ENCODE measurements at regions of chr6 and their contacts with region 1.

Region 1: DNA sequence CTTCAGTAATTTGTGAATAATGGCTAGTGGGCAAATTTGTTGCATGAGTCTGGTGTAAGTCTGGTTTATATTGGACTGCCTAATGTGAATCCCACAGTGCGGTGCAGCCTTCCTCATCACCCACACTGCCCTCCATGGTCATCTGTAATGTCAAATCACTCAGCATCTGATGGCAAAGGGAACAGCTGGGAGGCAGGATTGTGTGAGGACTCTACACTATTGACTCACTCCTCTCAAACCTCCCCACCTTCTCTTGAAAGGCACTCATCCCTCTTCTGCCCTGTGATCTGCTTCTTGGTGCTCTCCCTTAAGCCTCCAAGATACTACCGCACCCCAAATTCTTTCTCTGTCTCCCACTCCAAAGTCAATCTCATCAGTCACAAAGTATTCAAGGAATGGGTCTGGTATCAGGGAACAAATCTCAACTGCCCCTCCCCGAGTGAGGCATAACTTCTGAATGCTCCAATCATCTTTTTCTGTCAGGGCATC is 146.0 kb upstream of the BEND6 start:
- DNase-seq: peak; percentile 91
- H3K4me3 ChIP-seq: no peak overlapping the region
- H3K27ac ChIP-seq: peak overlapping the region; percentile 80
- H3K4me1 ChIP-seq: peaks cover 18% of the 10 kb centered on the region
- H3K27me3 ChIP-seq: no peaks in the 10 kb centered on the region
- CTCF ChIP-seq: no peak

Region 2: DNA sequence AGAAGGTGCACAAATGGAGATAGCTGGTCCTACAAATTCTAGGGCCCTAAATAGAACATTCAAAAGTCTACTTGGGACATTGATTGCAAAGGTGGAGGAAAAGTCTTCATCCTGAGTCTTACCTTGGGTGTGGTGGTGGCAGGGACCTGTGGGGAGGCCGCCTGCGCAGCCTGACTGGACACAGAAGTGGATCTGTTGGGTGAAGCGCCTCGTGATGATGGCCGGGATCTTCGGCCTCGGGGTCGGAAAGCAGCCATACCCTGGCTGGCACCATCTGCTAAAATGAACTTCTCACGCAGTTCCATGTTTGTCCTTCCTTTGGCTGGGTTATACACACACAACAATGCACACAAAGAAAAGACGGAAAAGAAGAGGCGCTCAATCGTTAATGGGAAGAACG is 345.5 kb before region 1 on chr6:
- CTCF ChIA-PET with region 1: no interaction called
- dilution Hi-C with region 1: no loop called
- in situ Hi-C with region 1: no loop called
- intact Hi-C with region 1: no loop called
- DNase-seq: no peak
- H3K4me3 ChIP-seq: no peak overlapping the region
- H3K27ac ChIP-seq: no peak overlapping the region
- H3K4me1 ChIP-seq: no peaks in the 10 kb centered on the region
- H3K27me3 ChIP-seq: no peaks in the 10 kb centered on the region
- CTCF ChIP-seq: no peak

Region 3: DNA sequence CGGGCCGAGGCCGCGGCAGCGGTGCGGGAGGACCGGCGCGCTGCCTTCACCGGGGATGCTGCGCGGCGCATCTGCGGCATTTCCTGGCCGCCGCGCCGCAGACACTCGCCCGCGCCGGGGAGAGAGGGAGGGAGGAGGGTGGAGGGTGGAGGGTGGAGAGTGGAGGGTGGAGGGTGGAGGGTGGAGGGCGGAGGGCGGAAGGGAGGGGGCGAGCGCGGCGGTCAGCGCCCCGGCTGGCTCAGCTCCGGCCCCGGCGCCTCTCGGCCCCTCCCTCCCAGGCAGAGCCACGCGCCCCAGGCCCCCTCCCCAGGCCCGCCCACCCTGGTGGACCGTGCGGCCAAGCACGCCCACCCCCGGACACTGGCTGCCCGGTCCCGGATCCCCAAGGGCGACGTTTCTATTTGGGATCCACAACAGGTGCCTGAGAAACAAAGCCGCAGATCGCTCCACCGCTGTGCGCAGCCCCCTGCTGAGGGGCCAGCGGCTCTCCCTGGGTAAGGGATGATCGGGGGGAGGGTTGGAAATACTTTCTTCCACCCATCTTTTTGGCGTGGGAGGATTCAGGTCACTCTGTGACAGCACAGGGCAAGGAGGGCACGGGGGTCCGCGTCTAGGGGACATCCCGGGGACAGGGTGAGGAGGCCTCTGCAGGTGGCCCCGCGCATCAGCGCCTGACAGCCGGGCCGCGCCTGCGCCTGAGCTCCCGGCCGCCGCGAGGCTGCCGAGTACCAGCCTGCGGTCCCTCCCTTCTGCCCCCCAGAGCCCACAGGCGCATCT is 34.8 kb after region 1 on chr6:
- CTCF ChIA-PET with region 1: no interaction called
- dilution Hi-C with region 1: no loop called
- in situ Hi-C with region 1: no loop called
- intact Hi-C with region 1: loop called (anchors 2 kb)
- DNase-seq: peak; percentile 81
- H3K4me3 ChIP-seq: peak overlapping the region; percentile 70 to 82 (median 73)
- H3K27ac ChIP-seq: peak overlapping the region; percentile 36
- H3K4me1 ChIP-seq: peaks cover 20% of the 10 kb centered on the region
- H3K27me3 ChIP-seq: no peaks in the 10 kb centered on the region
- CTCF ChIP-seq: peak; percentile 49 to 73